ENCODE measurements at regions of chr16 and their contacts with region 1.

Region 1: GRCh38 chr16:68448360-68448970 is at the start of gene SMPD3:
- DNase-seq: peak; percentile 99
- ATAC-seq: peak; percentile 98
- H3K4me3 Mint-ChIP-seq: peak within 1 kb of the TSS; percentile 71
- H3K27ac Mint-ChIP-seq: no peak within 1 kb of the TSS
- H3K4me1 Mint-ChIP-seq: peaks cover 14% of the 10 kb centered on the region
- H3K27me3 Mint-ChIP-seq: peaks cover 19% of the 10 kb centered on the region
- total RNA-seq, gene SMPD3: 0.07 to 0.37 TPM

Region 2: DNA sequence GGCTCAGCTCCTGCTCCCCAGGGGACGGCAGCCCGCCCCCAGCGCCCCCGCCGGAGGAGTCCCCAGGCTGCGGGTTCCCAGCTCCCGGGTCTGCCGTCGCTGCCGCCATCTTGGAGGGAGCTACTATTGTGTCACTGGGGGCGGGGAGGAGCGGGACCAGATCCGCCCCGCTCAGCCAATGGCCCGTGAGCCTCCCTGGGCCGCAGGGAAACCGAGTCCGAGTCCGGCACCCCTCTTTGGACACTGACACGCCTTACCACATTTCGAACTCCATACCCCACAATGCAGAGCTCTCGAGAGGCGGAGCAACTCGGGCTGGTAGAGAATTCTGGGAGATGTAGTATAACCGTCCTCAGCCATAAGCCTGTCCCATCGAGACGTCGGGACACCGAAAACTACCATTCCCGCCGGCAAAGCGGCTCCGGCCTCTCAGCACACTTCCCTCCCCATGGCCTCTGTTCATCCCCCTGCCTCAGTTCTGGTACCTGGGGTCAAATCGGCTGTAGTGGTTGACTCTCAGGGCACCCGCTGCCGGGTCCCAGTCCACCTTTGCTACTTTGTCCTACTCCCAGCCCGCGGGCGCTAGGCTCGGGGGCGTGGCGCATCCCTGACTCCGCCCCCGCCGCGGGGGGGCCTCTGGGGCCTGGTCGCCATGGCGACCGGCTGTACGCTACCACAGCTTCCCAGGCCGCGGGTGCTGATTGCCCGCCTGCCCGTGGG is 641.9 kb before region 1 on chr16 and contains the starts of genes RANBP10 and TSNAXIP1:
- CTCF ChIA-PET with region 1: no interaction called
- POLR2A ChIA-PET with region 1: no interaction called
- intact Hi-C with region 1: loop called in 1 of 2 experiments (anchors 1 kb)
- DNase-seq: peak; percentile 98
- ATAC-seq: peak; percentile 96
- H3K4me3 Mint-ChIP-seq: peak within 1 kb of the TSS; percentile 91
- H3K27ac Mint-ChIP-seq: peak within 1 kb of the TSS; percentile 91
- H3K4me1 Mint-ChIP-seq: peaks cover 39% of the 10 kb centered on the region
- H3K27me3 Mint-ChIP-seq: no peaks in the 10 kb centered on the region
- total RNA-seq, gene RANBP10: 15.6 to 18.0 TPM
- total RNA-seq, gene TSNAXIP1: 0.62 to 1.1 TPM

Region 3: GRCh38 chr16:67936124-67936879 is 512.2 kb before region 1 on chr16 and contains the start of gene PSMB10:
- CTCF ChIA-PET with region 1: no interaction called
- POLR2A ChIA-PET with region 1: no interaction called
- intact Hi-C with region 1: no loop called
- DNase-seq: peak; percentile 72
- ATAC-seq: peak; percentile 11
- H3K4me3 Mint-ChIP-seq: peak within 1 kb of the TSS; percentile 100
- H3K27ac Mint-ChIP-seq: peak within 1 kb of the TSS; percentile 100
- H3K4me1 Mint-ChIP-seq: peaks cover 37% of the 10 kb centered on the region
- H3K27me3 Mint-ChIP-seq: no peaks in the 10 kb centered on the region
- total RNA-seq, gene PSMB10: 123 to 195 TPM

Region 4: GRCh38 chr16:68244903-68245853 is 203.3 kb before region 1 on chr16 and contains the start of gene PLA2G15:
- CTCF ChIA-PET with region 1: no interaction called
- POLR2A ChIA-PET with region 1: no interaction called
- intact Hi-C with region 1: loop called in 1 of 2 experiments (anchors 1 kb)
- DNase-seq: peak; percentile 98
- ATAC-seq: peak; percentile 98
- H3K4me3 Mint-ChIP-seq: peak within 1 kb of the TSS; percentile 88
- H3K27ac Mint-ChIP-seq: peak within 1 kb of the TSS; percentile 83
- H3K4me1 Mint-ChIP-seq: peaks cover 15% of the 10 kb centered on the region
- H3K27me3 Mint-ChIP-seq: no peaks in the 10 kb centered on the region
- total RNA-seq, gene PLA2G15: 6.0 to 7.0 TPM

Region 5: GRCh38 chr16:68417711-68418301 is 30.7 kb before region 1 on chr16:
- CTCF ChIA-PET with region 1: interaction called, 3 read pairs
- POLR2A ChIA-PET with region 1: no interaction called
- intact Hi-C with region 1: loop called (anchors 1 to 2 kb)
- DNase-seq: peak; percentile 85
- ATAC-seq: peak; percentile 91
- H3K4me3 Mint-ChIP-seq: peak overlapping the region; percentile 67
- H3K27ac Mint-ChIP-seq: peak overlapping the region; percentile 88
- H3K4me1 Mint-ChIP-seq: peaks cover 59% of the 10 kb centered on the region
- H3K27me3 Mint-ChIP-seq: no peaks in the 10 kb centered on the region

Region 6: DNA sequence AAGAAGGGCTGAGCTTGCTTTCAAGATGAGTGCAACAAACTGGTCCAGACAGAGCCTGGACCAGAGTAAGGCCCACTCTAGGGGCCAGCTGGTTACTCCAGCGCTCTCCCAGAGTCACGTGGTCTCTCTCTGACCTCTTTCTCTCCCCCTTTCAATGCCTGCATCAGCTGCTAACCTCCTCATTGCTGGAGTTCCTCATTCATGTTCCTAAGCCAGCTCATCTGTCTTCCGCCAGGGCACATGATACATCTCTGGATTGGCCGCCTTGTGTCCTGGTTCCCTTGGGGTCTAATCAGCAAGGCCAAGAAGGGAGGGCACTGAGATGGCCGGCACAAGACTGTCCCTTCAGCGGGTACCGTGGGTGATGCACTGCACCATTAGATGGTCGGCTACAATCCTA is 63.7 kb after region 1 on chr16:
- CTCF ChIA-PET with region 1: interaction called, 6 read pairs
- POLR2A ChIA-PET with region 1: no interaction called
- intact Hi-C with region 1: loop called (anchors 1 kb)
- DNase-seq: no peak
- ATAC-seq: no peak
- H3K4me3 Mint-ChIP-seq: no peak overlapping the region
- H3K27ac Mint-ChIP-seq: no peak overlapping the region
- H3K4me1 Mint-ChIP-seq: no peaks in the 10 kb centered on the region
- H3K27me3 Mint-ChIP-seq: no peaks in the 10 kb centered on the region

Region 7: DNA sequence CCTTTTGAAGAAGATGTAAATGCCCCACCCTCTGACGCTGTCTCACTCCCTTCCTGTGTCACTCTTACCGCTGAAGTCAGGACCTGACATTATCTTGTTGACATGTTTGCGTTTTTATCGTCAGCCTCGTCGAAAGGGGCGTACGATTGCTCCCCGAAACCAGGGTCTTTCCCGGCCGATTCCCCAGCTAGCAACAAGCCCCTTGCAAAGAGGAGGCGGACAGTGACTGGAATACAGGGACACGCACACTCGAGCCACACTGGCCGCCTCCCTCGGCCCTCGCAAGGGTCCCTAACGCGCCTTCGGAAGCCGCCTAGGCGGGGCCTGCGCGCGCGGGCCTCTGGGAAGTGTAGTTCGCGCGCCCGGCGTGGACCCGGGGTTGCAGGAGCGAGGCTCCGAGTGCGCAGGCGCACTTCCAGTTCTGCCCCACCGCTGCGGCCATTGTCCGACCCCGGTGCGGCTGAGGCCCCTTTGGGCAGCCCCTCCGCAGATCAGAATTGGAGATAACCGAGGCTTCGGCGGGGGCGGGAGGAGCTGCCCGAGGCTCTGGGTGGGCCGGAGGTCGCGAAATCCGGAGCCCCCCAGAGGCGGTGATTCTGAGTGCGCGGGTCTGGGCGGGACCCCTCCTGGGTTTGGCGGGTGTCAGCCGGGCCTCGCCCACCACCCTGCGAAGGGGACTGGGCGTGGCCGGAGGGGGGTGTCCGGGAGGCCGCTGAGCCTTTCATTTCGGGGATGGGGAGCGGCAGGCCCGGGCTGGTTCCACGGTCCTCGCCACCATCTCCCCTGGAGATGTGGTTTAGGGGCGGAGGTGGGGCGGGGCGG is 90.6 kb after region 1 on chr16 and contains the start of gene ZFP90:
- CTCF ChIA-PET with region 1: no interaction called
- POLR2A ChIA-PET with region 1: no interaction called
- intact Hi-C with region 1: loop called in 1 of 2 experiments (anchors 1 kb)
- DNase-seq: peak; percentile 93
- ATAC-seq: peak; percentile 96
- H3K4me3 Mint-ChIP-seq: peak within 1 kb of the TSS; percentile 89
- H3K27ac Mint-ChIP-seq: peak within 1 kb of the TSS; percentile 98
- H3K4me1 Mint-ChIP-seq: peaks cover 16% of the 10 kb centered on the region
- H3K27me3 Mint-ChIP-seq: no peaks in the 10 kb centered on the region
- total RNA-seq, gene ZFP90: 31.4 to 31.6 TPM

Measured in activated CD4-positive, alpha-beta T cell treated with anti-CD3 and anti-CD28 coated beads for 36 hours (primary cell).